CD8-positive, alpha-beta T cell (primary cell): ENCODE measurements at regions of chr6 and their contacts with region 1.

Region 1: DNA sequence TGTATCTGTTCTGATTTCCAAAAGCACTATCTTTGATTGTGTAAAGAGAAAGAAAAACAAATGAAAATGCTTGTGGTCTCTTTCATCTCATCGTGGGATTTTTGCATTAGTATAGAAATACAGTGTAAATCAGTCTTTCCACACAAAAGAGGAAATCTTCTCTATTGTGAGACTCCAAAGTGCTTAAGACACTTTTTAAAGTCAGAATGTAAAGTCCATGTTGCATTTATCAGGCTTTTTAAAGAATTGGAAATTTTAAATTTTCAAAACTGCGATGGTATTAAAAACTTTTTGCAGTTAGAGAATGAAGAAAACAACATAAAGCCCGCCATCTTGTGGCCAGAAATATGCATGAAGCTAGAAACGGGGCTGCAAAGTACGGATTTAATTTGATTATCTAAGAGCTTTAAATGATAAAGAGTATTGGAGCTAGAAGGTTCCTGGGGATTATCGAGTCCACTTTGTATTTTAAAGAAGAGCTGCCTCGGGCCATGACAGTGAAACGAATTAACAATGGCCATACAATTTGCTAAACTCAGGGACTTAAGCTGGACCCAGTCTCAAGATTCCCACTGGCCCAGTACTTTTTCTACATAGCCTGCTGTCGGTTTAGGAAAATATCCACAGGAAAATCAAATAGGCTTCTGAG is 339.6 kb downstream of the ARHGAP18 start:
- DNase-seq: peak in 8 of 9 experiments; percentile 7 to 60 (median 47)
- ATAC-seq: no peak
- H3K4me3 ChIP-seq: no peak overlapping the region
- H3K4me3 Mint-ChIP-seq: no peak overlapping the region
- H3K27ac ChIP-seq: no peak overlapping the region
- H3K27ac Mint-ChIP-seq: no peak overlapping the region
- H3K4me1 ChIP-seq: no peaks in the 10 kb centered on the region
- H3K4me1 Mint-ChIP-seq: peaks cover 12% of the 10 kb centered on the region
- H3K27me3 ChIP-seq: no peaks in the 10 kb centered on the region
- H3K27me3 Mint-ChIP-seq: no peaks in the 10 kb centered on the region
- CTCF ChIP-seq: peak; percentile 81

Region 2: GRCh38 chr6:127554435-127555006 is 1815.9 kb before region 1 on chr6:
- CTCF ChIA-PET with region 1: no interaction called
- POLR2A ChIA-PET with region 1: no interaction called
- intact Hi-C with region 1: loop called (anchors 1 to 2 kb)
- DNase-seq: peak in 2 of 9 experiments; percentile 27 to 39
- ATAC-seq: no peak
- H3K4me3 ChIP-seq: no peak overlapping the region
- H3K4me3 Mint-ChIP-seq: no peak overlapping the region
- H3K27ac ChIP-seq: no peak overlapping the region
- H3K27ac Mint-ChIP-seq: no peak overlapping the region
- H3K4me1 ChIP-seq: no peaks in the 10 kb centered on the region
- H3K4me1 Mint-ChIP-seq: no peaks in the 10 kb centered on the region
- H3K27me3 ChIP-seq: no peaks in the 10 kb centered on the region
- H3K27me3 Mint-ChIP-seq: peaks cover 30% of the 10 kb centered on the region
- CTCF ChIP-seq: no peak

Region 3: DNA sequence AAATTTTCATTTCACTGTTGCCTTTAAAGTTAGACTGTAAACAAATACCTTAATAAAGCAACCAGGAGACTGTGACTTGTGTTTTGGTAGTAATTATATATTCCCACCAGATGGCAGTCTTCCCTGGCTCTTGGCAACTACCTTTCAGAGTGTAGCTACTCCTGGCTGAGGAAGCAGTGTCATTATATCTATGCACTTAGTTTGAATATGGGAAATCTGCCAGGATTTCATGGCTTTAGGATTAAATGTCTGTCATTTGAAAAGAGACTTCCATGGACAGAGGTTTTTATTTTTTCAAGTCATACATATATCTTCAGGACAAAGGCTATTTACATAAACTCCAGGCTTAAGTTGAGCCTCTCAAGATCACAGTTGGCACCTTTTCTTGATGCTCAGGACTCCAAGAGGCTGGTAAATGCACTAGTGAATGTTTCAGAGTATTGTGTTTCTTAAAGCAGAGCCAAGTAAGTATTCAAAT is 1633.3 kb before region 1 on chr6:
- CTCF ChIA-PET with region 1: no interaction called
- POLR2A ChIA-PET with region 1: no interaction called
- intact Hi-C with region 1: loop called in 1 of 2 experiments (anchors 2 kb)
- DNase-seq: peak in 7 of 9 experiments; percentile 4 to 84 (median 41)
- ATAC-seq: peak; percentile 96
- H3K4me3 ChIP-seq: no peak overlapping the region
- H3K4me3 Mint-ChIP-seq: no peak overlapping the region
- H3K27ac ChIP-seq: peak overlapping the region in 1 of 2 experiments; percentile 21
- H3K27ac Mint-ChIP-seq: peak overlapping the region; percentile 69
- H3K4me1 ChIP-seq: peaks cover 31% of the 10 kb centered on the region
- H3K4me1 Mint-ChIP-seq: peaks cover 67% of the 10 kb centered on the region
- H3K27me3 ChIP-seq: no peaks in the 10 kb centered on the region
- H3K27me3 Mint-ChIP-seq: no peaks in the 10 kb centered on the region
- CTCF ChIP-seq: peak; percentile 84

Region 4: GRCh38 chr6:128731249-128732165 is 638.9 kb before region 1 on chr6:
- CTCF ChIA-PET with region 1: no interaction called
- POLR2A ChIA-PET with region 1: no interaction called
- intact Hi-C with region 1: loop called in 1 of 2 experiments (anchors 5 kb)
- DNase-seq: peak in 2 of 9 experiments; percentile 33 to 49
- ATAC-seq: no peak
- H3K4me3 ChIP-seq: no peak overlapping the region
- H3K4me3 Mint-ChIP-seq: no peak overlapping the region
- H3K27ac ChIP-seq: no peak overlapping the region
- H3K27ac Mint-ChIP-seq: no peak overlapping the region
- H3K4me1 ChIP-seq: no peaks in the 10 kb centered on the region
- H3K4me1 Mint-ChIP-seq: no peaks in the 10 kb centered on the region
- H3K27me3 ChIP-seq: no peaks in the 10 kb centered on the region
- H3K27me3 Mint-ChIP-seq: peaks cover 11% of the 10 kb centered on the region
- CTCF ChIP-seq: peak; percentile 40

Region 5: DNA sequence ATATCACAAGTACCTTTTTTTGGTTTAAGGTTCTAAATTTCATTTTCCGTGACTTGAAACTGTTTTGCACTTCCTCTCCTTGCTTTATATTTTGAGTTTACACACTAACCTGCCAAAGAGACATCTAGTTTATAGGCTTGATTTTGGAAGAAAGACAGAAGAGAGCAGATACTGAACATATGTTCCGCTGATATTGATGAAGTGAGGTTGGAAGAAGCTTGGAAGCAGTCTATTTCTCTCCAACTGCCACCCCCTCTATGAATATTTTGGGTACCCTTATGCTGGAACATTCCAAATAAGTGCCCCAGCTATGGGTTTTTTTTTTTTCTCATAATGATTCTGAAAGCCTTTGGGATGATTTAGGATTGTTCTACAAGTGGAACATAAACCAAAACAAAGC is 336.8 kb before region 1 on chr6:
- CTCF ChIA-PET with region 1: no interaction called
- POLR2A ChIA-PET with region 1: no interaction called
- intact Hi-C with region 1: no loop called
- DNase-seq: no peak
- ATAC-seq: no peak
- H3K4me3 ChIP-seq: no peak overlapping the region
- H3K4me3 Mint-ChIP-seq: no peak overlapping the region
- H3K27ac ChIP-seq: no peak overlapping the region
- H3K27ac Mint-ChIP-seq: no peak overlapping the region
- H3K4me1 ChIP-seq: no peaks in the 10 kb centered on the region
- H3K4me1 Mint-ChIP-seq: no peaks in the 10 kb centered on the region
- H3K27me3 ChIP-seq: no peaks in the 10 kb centered on the region
- H3K27me3 Mint-ChIP-seq: peaks cover 5% of the 10 kb centered on the region
- CTCF ChIP-seq: no peak

Region 6: DNA sequence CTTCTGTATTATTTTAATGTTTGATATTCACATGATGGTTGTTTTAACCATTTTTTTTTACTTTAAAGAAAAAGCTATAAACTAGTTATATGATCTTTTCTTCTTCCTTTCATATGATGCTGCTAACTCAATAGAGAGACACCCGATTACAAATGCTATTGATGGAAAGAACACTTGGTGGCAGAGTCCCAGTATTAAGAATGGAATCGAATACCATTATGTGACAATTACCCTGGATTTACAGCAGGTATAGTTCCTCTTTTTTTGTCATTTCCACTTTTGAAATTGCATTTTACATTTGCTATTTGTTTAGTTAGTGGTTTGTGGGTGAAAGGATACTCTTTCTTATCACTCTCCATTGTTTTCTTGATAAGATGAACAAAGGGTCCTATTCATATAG is 310.7 kb before region 1 on chr6:
- CTCF ChIA-PET with region 1: no interaction called
- POLR2A ChIA-PET with region 1: no interaction called
- intact Hi-C with region 1: no loop called
- DNase-seq: no peak
- ATAC-seq: no peak
- H3K4me3 ChIP-seq: no peak overlapping the region
- H3K4me3 Mint-ChIP-seq: no peak overlapping the region
- H3K27ac ChIP-seq: no peak overlapping the region
- H3K27ac Mint-ChIP-seq: no peak overlapping the region
- H3K4me1 ChIP-seq: no peaks in the 10 kb centered on the region
- H3K4me1 Mint-ChIP-seq: no peaks in the 10 kb centered on the region
- H3K27me3 ChIP-seq: peaks cover 0 to 5% of the 10 kb centered on the region in 2 experiments
- H3K27me3 Mint-ChIP-seq: no peaks in the 10 kb centered on the region
- CTCF ChIP-seq: no peak

Region 7: GRCh38 chr6:129575378-129576118 is 205.2 kb after region 1 on chr6:
- CTCF ChIA-PET with region 1: no interaction called
- POLR2A ChIA-PET with region 1: no interaction called
- intact Hi-C with region 1: loop called in 1 of 2 experiments (anchors 1 kb)
- DNase-seq: peak in 2 of 9 experiments; percentile 36 to 55
- ATAC-seq: peak; percentile 42
- H3K4me3 ChIP-seq: peak overlapping the region; percentile 12 to 26
- H3K4me3 Mint-ChIP-seq: peak overlapping the region; percentile 52
- H3K27ac ChIP-seq: no peak overlapping the region
- H3K27ac Mint-ChIP-seq: no peak overlapping the region
- H3K4me1 ChIP-seq: no peaks in the 10 kb centered on the region
- H3K4me1 Mint-ChIP-seq: peaks cover 5% of the 10 kb centered on the region
- H3K27me3 ChIP-seq: no peaks in the 10 kb centered on the region
- H3K27me3 Mint-ChIP-seq: no peaks in the 10 kb centered on the region
- CTCF ChIP-seq: peak; percentile 62